MCF 10A (cell line): ENCODE measurements at regions of chr2 and their contacts with region 1.

Region 1: DNA sequence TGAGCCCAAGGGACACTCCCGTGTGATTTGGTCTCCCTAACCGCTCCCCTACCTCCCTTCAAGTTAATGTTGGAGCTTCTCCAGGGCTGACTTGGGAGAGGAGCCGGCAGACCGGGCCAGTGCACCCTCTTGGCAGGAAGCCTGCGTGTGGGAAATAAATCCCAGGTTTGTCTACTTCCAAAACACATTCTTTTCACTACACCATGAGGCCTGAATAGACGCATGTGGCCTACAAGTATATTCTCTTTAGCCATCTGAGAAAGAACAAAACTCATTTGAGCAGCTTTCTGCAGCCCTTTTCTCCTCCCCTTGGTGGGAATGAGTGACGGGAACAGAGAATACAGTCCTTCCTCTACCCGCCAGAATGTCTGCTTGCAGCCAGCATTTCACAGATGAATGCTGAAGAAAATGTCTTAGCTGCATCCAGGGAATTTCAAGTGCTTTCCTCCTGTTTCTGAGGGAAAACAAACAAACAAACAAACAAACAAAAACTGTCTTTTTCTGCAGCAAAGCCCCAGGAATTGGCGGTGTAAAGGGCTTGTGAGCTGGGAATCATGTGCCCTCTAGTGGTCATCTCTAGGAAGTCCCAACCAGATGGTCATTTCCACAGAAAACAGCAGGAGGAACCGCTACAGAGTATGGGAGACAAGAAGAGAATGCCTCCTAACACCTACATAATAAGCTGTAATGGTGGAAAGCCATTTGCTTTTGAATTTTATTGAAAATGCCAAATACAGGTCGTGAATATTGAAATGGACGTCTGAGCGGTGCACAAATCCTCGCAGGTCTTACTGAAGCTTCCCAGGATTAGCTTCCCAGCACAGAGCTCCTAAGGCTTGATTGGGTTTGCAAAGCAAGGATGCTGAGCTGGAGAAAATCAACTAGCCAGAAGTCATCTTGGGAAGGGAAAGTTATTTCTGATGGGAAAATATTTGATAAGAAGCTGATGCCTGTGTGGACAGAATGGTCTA is 41.2 kb upstream of the DAPL1 start:
- DNase-seq: peak; percentile 70
- H3K4me3 Mint-ChIP-seq: no peak overlapping the region
- H3K27ac Mint-ChIP-seq: no peak overlapping the region
- H3K4me1 Mint-ChIP-seq: no peaks in the 10 kb centered on the region
- H3K27me3 Mint-ChIP-seq: peaks cover 29% of the 10 kb centered on the region
- CTCF ChIP-seq: peak; percentile 69

Region 2: DNA sequence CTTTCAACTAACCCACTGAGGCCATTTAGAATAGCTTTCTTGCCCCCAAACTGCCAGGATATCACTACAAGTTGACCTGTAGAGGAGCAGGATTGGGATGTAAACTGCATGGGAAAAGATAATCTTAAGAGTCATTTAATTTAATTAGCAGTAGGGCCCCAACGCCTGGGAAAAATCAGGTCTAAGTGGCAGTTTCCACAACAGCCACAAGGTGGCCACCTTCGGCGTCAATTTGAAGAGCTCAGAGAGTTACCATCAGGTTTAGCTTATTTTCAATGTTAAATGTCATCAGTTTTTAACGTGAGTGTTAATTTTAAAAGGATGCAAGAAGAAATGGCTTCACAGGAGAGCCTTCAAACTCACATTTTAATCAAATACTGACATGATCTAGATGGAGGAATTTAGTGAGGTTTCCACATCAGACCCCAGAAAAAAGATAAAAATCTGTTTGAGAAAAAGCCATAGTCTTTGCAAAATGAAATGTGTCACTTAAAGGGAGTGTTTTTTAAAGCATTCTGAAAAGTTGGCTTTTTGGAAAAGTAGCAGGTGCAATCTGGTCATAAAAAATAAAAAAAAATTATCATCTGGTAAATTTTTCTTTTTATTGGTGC is 729.5 kb before region 1 on chr2:
- CTCF ChIA-PET with region 1: interaction called, 343 read pairs
- POLR2A ChIA-PET with region 1: interaction called, 3 read pairs
- intact Hi-C with region 1: loop called (anchors 1 kb)
- DNase-seq: peak; percentile 64
- H3K4me3 Mint-ChIP-seq: no peak overlapping the region
- H3K27ac Mint-ChIP-seq: no peak overlapping the region
- H3K4me1 Mint-ChIP-seq: no peaks in the 10 kb centered on the region
- H3K27me3 Mint-ChIP-seq: no peaks in the 10 kb centered on the region
- CTCF ChIP-seq: peak; percentile 73

Region 3: GRCh38 chr2:158072361-158072760 is 681.6 kb before region 1 on chr2:
- CTCF ChIA-PET with region 1: interaction called, 14 read pairs
- POLR2A ChIA-PET with region 1: no interaction called
- intact Hi-C with region 1: no loop called
- DNase-seq: no peak
- H3K4me3 Mint-ChIP-seq: no peak overlapping the region
- H3K27ac Mint-ChIP-seq: no peak overlapping the region
- H3K4me1 Mint-ChIP-seq: no peaks in the 10 kb centered on the region
- H3K27me3 Mint-ChIP-seq: no peaks in the 10 kb centered on the region
- CTCF ChIP-seq: no peak

Region 4: DNA sequence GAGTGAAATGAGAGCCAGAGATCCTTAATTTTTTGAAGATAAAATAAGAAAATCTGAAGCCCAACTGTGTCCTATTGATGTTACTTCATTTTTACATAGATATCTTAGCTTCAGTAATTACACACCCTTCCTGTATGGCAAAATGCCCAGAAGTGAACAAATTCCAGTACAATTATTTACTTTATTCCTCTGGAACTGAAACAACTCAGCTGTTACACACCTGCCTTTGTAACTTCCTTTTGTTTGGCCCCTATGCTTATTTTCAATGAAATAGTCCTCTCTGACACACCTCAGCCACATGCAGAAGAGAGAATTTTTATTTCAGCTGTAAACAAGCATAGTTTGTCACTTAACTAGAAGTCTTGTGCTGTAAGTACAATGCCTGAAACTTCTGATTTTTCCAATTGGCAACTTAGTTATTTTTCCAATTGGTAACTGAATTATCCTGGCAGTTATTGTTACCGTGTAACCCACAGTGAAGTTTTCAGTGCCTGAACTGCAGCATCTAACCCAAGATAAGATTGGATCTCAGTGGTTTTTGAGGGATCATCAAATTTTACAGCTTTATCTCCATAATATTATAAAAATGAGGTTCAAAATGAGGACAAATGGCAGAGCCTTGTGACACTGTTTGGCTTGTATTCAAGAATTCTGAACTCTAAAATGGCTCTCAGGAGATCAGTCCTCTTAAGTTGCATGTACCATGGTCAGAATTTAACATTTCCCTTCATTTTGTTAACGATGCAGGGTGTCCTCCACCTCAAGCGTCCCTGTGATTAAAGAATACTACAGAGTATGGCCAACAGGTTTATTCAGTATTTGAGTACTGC is 214.5 kb before region 1 on chr2:
- CTCF ChIA-PET with region 1: interaction called, 6 read pairs
- POLR2A ChIA-PET with region 1: no interaction called
- intact Hi-C with region 1: loop called (anchors 10 kb)
- DNase-seq: peak; percentile 89
- H3K4me3 Mint-ChIP-seq: no peak overlapping the region
- H3K27ac Mint-ChIP-seq: peak overlapping the region; percentile 69
- H3K4me1 Mint-ChIP-seq: peaks cover 8% of the 10 kb centered on the region
- H3K27me3 Mint-ChIP-seq: no peaks in the 10 kb centered on the region
- CTCF ChIP-seq: no peak

Region 5: GRCh38 chr2:158733430-158733755 is 20.5 kb before region 1 on chr2:
- CTCF ChIA-PET with region 1: interaction called, 21 read pairs
- POLR2A ChIA-PET with region 1: interaction called, 3 read pairs
- intact Hi-C with region 1: no loop called
- DNase-seq: no peak
- H3K4me3 Mint-ChIP-seq: no peak overlapping the region
- H3K27ac Mint-ChIP-seq: no peak overlapping the region
- H3K4me1 Mint-ChIP-seq: peaks cover 12% of the 10 kb centered on the region
- H3K27me3 Mint-ChIP-seq: peaks cover 13% of the 10 kb centered on the region
- CTCF ChIP-seq: no peak

Region 6: GRCh38 chr2:160210599-160211138 is 1456.7 kb after region 1 on chr2:
- CTCF ChIA-PET with region 1: no interaction called
- POLR2A ChIA-PET with region 1: no interaction called
- intact Hi-C with region 1: no loop called
- DNase-seq: peak; percentile 90
- H3K4me3 Mint-ChIP-seq: no peak overlapping the region
- H3K27ac Mint-ChIP-seq: peak overlapping the region; percentile 73
- H3K4me1 Mint-ChIP-seq: peaks cover 55% of the 10 kb centered on the region
- H3K27me3 Mint-ChIP-seq: no peaks in the 10 kb centered on the region
- CTCF ChIP-seq: peak; percentile 68